ENCODE measurements at regions of chr10 and their contacts with region 1.

Region 1: GRCh38 chr10:93482145-93482834 is at the start of gene MYOF:
- DNase-seq: peak; percentile 88
- ATAC-seq: peak; percentile 71
- H3K4me3 ChIP-seq: peak within 1 kb of the TSS; percentile 97
- H3K27ac ChIP-seq: peak within 1 kb of the TSS; percentile 100
- H3K4me1 ChIP-seq: peaks cover 24% of the 10 kb centered on the region
- H3K27me3 ChIP-seq: no peaks in the 10 kb centered on the region
- CTCF ChIP-seq: peak; percentile 46; the same call in 1 of the 2 replicates
- total RNA-seq, gene MYOF: 174 and 189 TPM in 2 replicates

Region 2: GRCh38 chr10:93376372-93377293 is 105.7 kb before region 1 on chr10:
- CTCF ChIA-PET with region 1: interaction called, 12 read pairs
- POLR2A ChIA-PET with region 1: interaction called, 8 read pairs
- intact Hi-C with region 1: loop called (anchors 1 kb)
- DNase-seq: peak; percentile 88
- ATAC-seq: peak; percentile 76
- H3K4me3 ChIP-seq: peak overlapping the region; percentile 34; the same call in 1 of the 2 replicates
- H3K27ac ChIP-seq: peak overlapping the region; percentile 94
- H3K4me1 ChIP-seq: peaks cover 43% of the 10 kb centered on the region
- H3K27me3 ChIP-seq: no peaks in the 10 kb centered on the region
- CTCF ChIP-seq: peak; percentile 84

Region 3: GRCh38 chr10:93437088-93437945 is 45.0 kb before region 1 on chr10:
- CTCF ChIA-PET with region 1: no interaction called
- POLR2A ChIA-PET with region 1: interaction called, 15 read pairs
- intact Hi-C with region 1: loop called (anchors 5 kb)
- DNase-seq: peak; percentile 91
- ATAC-seq: peak; percentile 92
- H3K4me3 ChIP-seq: peak overlapping the region; percentile 46
- H3K27ac ChIP-seq: peak overlapping the region; percentile 99
- H3K4me1 ChIP-seq: peaks cover 45% of the 10 kb centered on the region
- H3K27me3 ChIP-seq: no peaks in the 10 kb centered on the region
- CTCF ChIP-seq: no peak

Region 4: GRCh38 chr10:93458821-93459257 is 23.5 kb before region 1 on chr10:
- CTCF ChIA-PET with region 1: interaction called, 8 read pairs
- POLR2A ChIA-PET with region 1: interaction called, 16 read pairs
- intact Hi-C with region 1: no loop called
- DNase-seq: peak; percentile 96
- ATAC-seq: peak; percentile 76
- H3K4me3 ChIP-seq: peak overlapping the region; percentile 38; the same call in 1 of the 2 replicates
- H3K27ac ChIP-seq: peak overlapping the region; percentile 93
- H3K4me1 ChIP-seq: peaks cover 47% of the 10 kb centered on the region
- H3K27me3 ChIP-seq: no peaks in the 10 kb centered on the region
- CTCF ChIP-seq: no peak

Region 5: GRCh38 chr10:93471110-93471651 is 11.1 kb before region 1 on chr10:
- CTCF ChIA-PET with region 1: interaction called, 9 read pairs
- POLR2A ChIA-PET with region 1: interaction called, 37 read pairs
- intact Hi-C with region 1: loop called (anchors 1 kb)
- DNase-seq: peak; percentile 94
- ATAC-seq: peak; percentile 44
- H3K4me3 ChIP-seq: no peak overlapping the region
- H3K27ac ChIP-seq: peak overlapping the region; percentile 99
- H3K4me1 ChIP-seq: peaks cover 89% of the 10 kb centered on the region
- H3K27me3 ChIP-seq: no peaks in the 10 kb centered on the region
- CTCF ChIP-seq: no peak